ENCODE measurements at regions of chr17 and their contacts with region 1.

Region 1: GRCh38 chr17:68457539-68458259 is 403 bp upstream of the WIPI1 start:
- DNase-seq: peak; percentile 91 to 99 (median 97)
- ATAC-seq: peak; percentile 94 to 99 (median 98)
- H3K4me3 ChIP-seq: peak overlapping the region; percentile 39 to 59
- H3K4me3 Mint-ChIP-seq: peak overlapping the region; percentile 76 to 82 (median 77)
- H3K27ac ChIP-seq: peak overlapping the region; percentile 47
- H3K27ac Mint-ChIP-seq: peak overlapping the region; percentile 78 to 87
- H3K4me1 ChIP-seq: peaks cover 30 to 48% of the 10 kb centered on the region in 2 experiments
- H3K4me1 Mint-ChIP-seq: peaks cover 55 to 64% (median 61%) of the 10 kb centered on the region in 3 donors
- H3K27me3 ChIP-seq: no peaks in the 10 kb centered on the region
- H3K27me3 Mint-ChIP-seq: no peaks in the 10 kb centered on the region

Region 2: DNA sequence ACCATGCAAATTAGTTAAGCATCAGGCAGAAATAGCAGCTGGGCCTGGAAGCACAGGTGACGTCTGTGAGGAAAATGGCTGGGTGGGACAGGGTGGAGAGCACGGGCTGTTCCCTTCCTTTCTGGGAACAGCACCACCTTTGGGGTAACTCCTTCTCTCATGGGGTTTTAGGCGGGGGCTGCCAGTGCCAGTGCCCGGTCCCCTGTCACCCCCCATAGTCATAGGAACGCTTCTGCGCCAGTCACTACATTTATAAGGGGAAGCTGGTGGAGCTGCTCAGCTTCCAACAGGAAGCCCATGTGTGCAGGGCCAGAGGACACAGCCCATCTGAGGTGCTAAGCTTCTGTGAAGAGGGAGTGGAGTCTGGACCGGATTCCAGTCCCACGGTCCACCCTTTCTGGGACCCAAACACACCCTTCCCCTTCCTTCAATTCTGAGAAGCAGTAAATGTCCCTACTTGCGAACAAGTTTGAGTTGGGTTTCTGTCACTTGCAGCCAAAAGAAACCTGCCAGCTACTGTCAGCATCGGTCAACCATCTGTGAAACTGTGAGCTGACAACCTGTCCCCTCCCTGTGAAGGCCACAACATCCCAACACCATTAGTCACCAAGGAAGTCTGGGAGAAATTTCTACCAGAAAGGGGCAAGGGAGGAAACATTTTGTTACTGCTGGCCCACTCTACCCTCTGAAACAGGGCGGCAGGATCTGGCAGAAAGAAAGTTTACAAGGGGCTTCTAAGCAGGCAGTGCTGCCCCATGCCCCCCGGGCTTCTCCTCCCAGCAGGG is 295.9 kb before region 1 on chr17:
- CTCF ChIA-PET with region 1: no interaction called
- POLR2A ChIA-PET with region 1: interaction called, 4 to 12 read pairs
- DNase-seq: no peak
- ATAC-seq: no peak
- H3K4me3 ChIP-seq: no peak overlapping the region
- H3K4me3 Mint-ChIP-seq: no peak overlapping the region
- H3K27ac ChIP-seq: no peak overlapping the region
- H3K27ac Mint-ChIP-seq: no peak overlapping the region
- H3K4me1 ChIP-seq: peaks cover 0 to 2% of the 10 kb centered on the region in 2 experiments
- H3K4me1 Mint-ChIP-seq: peaks cover 0 to 7% (median 6%) of the 10 kb centered on the region in 3 donors
- H3K27me3 ChIP-seq: no peaks in the 10 kb centered on the region
- H3K27me3 Mint-ChIP-seq: no peaks in the 10 kb centered on the region

Region 3: DNA sequence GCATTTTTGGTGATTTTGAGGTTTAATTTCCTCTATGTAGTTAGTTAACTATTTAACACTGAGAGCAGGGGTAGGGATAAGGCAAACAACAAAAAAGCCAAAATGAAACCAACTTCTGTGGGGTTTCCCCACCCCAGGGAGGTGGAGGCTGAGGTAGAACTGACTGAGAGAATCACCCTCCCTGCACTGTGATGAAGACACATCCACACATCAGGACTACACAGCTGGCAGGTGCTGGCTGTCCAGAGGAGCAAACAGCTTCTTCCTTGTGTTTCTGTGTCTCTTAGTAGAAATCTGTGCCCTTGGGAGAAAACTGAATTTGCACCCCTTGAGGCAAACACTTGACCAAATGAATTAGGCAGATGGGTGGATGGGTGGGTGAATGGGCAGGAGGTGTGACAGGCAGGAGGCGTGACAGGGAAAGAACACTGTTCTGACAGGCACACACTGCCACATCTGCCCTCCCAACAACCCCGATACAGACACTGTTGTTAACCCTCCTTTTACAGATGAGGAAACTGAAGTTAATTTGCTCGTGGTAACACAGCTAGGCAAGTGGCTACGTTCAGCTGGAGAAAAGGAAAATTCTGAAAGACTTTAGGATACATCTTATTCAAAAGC is 272.8 kb before region 1 on chr17:
- CTCF ChIA-PET with region 1: interaction called, 4 to 14 read pairs
- POLR2A ChIA-PET with region 1: interaction called in 1 of 2 experiments, 10 read pairs
- DNase-seq: peak in 32 of 35 experiments; percentile 31 to 85 (median 61)
- ATAC-seq: peak; percentile 54 to 81 (median 65)
- H3K4me3 ChIP-seq: peak overlapping the region in 1 of 2 donors; percentile 1
- H3K4me3 Mint-ChIP-seq: peak overlapping the region; percentile 61 to 91 (median 86)
- H3K27ac ChIP-seq: peak overlapping the region; percentile 86
- H3K27ac Mint-ChIP-seq: peak overlapping the region; percentile 84 to 95
- H3K4me1 ChIP-seq: peaks cover 39 to 56% of the 10 kb centered on the region in 2 experiments
- H3K4me1 Mint-ChIP-seq: peaks cover 54 to 81% (median 64%) of the 10 kb centered on the region in 3 donors
- H3K27me3 ChIP-seq: no peaks in the 10 kb centered on the region
- H3K27me3 Mint-ChIP-seq: no peaks in the 10 kb centered on the region

Region 4: GRCh38 chr17:68260051-68260762 is 197.5 kb before region 1 on chr17:
- CTCF ChIA-PET with region 1: interaction called, 5 to 7 read pairs
- POLR2A ChIA-PET with region 1: interaction called in 1 of 2 experiments, 10 read pairs
- DNase-seq: no peak
- ATAC-seq: no peak
- H3K4me3 ChIP-seq: no peak overlapping the region
- H3K4me3 Mint-ChIP-seq: peak overlapping the region in 1 of 3 donors; percentile 68
- H3K27ac ChIP-seq: peak overlapping the region; percentile 89
- H3K27ac Mint-ChIP-seq: peak overlapping the region; percentile 89 to 92
- H3K4me1 ChIP-seq: peaks cover 32 to 52% of the 10 kb centered on the region in 2 experiments
- H3K4me1 Mint-ChIP-seq: peaks cover 58 to 68% (median 66%) of the 10 kb centered on the region in 3 donors
- H3K27me3 ChIP-seq: no peaks in the 10 kb centered on the region
- H3K27me3 Mint-ChIP-seq: no peaks in the 10 kb centered on the region

Region 5: DNA sequence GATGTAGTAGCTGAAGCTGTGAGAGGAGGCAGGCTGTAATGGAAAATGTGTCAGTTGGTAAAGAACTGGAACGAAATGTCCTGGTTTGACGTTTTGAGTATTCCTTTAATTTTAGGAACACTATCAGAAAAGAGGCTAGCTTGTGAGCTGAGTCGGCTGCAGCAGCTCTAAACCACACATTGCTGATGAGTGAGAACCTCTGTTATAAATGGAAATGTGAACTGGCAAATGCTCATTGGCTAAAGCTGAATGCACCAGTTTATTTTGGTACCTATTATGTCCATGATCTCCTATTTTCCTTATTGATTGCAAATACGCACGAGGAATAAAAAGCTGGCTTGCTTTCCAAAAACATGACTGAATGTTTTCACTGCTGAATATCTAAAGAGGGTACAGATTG is 10.6 kb after region 1 on chr17:
- CTCF ChIA-PET with region 1: interaction called in 1 of 2 experiments, 10 read pairs
- POLR2A ChIA-PET with region 1: no interaction called
- DNase-seq: no peak
- ATAC-seq: no peak
- H3K4me3 ChIP-seq: no peak overlapping the region
- H3K4me3 Mint-ChIP-seq: no peak overlapping the region
- H3K27ac ChIP-seq: no peak overlapping the region
- H3K27ac Mint-ChIP-seq: no peak overlapping the region
- H3K4me1 ChIP-seq: no peaks in the 10 kb centered on the region
- H3K4me1 Mint-ChIP-seq: peaks cover 0 to 6% (median 1%) of the 10 kb centered on the region in 3 donors
- H3K27me3 ChIP-seq: peaks cover 0 to 5% of the 10 kb centered on the region in 2 experiments
- H3K27me3 Mint-ChIP-seq: peaks cover 5 to 13% of the 10 kb centered on the region in 2 donors

Region 6: DNA sequence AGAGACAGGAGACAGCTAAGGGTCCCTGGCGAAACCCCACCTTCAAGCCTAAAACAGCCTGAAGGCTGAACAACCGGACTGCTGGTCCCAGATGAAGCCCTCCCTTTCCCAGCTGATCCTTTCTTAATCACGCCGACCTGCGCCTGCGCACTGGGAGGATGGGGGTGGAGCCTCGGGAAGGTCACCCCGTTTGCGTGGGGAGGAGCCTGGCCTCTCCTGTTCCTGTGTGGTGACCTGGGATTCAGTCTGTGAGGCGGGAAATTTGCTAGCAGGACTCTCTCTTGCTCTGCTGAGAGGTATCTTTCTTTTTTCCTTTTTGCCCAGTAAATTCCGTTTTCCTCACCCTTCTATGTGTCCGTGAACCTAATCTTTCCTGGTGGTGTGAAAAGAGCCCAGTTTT is 133.9 kb after region 1 on chr17:
- CTCF ChIA-PET with region 1: no interaction called
- POLR2A ChIA-PET with region 1: no interaction called
- DNase-seq: no peak
- ATAC-seq: no peak
- H3K4me3 ChIP-seq: no peak overlapping the region
- H3K4me3 Mint-ChIP-seq: no peak overlapping the region
- H3K27ac ChIP-seq: no peak overlapping the region
- H3K27ac Mint-ChIP-seq: no peak overlapping the region
- H3K4me1 ChIP-seq: peaks cover 3 to 8% of the 10 kb centered on the region in 2 experiments
- H3K4me1 Mint-ChIP-seq: peaks cover 10 to 15% (median 12%) of the 10 kb centered on the region in 3 donors
- H3K27me3 ChIP-seq: peaks cover 6 to 20% of the 10 kb centered on the region in 2 experiments
- H3K27me3 Mint-ChIP-seq: peaks cover 45 to 47% of the 10 kb centered on the region in 2 donors

Measured in T-cell (primary cell).